ENCODE measurements at regions of chr6 and their contacts with region 1.

Region 1: DNA sequence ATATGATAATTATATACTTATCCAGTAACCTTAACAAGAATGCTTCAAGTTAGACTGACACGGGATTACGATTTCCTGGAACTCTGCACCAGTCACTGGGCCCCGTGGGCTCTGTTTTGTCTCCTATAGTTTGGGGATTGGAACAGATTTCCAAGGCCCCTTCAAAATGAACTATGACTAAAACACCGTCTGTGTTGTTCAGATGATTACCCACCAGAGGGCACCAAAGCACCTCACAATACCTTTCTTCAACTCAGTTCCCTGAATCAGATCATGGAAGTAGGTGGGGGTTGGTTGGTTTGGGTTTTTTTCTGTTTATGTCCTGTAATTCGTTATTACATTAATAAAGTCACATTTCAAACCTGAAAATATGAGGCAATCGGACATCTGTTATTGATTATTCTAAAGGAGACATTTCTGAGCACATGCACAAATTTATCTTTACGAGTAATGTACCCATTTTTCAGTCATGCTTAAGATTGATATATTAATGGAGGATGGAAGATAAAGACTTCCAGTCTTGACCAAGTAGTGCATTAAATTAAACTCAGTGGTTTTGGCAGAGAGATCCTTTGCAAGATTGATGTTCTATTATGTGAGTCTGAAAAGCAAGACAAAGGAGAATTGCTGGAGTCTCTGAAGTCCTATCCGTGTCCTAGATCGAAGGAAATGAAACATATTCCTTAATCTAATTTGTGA is 112.0 kb upstream of the COL21A1 start:
- DNase-seq: no peak

Region 2: GRCh38 chr6:56222499-56222898 is 136.9 kb before region 1 on chr6:
- intact Hi-C with region 1: no loop called
- DNase-seq: no peak

Region 3: DNA sequence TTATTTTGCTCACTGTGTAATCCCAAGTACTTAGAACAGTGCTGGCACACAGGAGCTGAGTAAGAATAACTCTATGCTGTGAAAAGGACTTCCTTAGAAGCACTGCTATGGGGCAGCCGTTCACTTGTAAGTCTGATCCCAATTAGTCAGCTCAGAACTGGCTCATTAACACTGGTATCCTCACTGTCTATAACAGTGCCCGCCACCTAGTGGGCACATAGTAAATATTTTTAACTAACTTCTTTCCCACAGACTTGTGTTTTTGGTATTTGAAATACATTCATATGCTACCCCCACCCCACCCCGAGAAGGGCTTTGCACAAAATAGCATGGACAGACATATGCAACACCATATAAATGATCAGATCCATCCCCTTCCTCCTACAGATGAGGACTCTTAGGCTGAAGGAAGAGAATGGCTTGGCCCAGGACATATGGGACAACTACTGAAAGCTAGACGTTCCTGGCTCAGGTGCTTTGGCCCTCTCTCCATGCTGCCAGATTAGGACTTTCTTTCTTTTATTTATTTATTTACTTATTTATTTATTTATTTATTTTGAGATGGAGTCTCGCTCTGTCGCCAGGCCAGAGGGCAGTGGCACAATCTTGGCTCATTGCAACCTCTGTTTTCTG is 236.3 kb after region 1 on chr6:
- intact Hi-C with region 1: loop called (anchors 2 kb)
- DNase-seq: no peak